ENCODE measurements at regions of chr2 and their contacts with region 1.

Region 1: DNA sequence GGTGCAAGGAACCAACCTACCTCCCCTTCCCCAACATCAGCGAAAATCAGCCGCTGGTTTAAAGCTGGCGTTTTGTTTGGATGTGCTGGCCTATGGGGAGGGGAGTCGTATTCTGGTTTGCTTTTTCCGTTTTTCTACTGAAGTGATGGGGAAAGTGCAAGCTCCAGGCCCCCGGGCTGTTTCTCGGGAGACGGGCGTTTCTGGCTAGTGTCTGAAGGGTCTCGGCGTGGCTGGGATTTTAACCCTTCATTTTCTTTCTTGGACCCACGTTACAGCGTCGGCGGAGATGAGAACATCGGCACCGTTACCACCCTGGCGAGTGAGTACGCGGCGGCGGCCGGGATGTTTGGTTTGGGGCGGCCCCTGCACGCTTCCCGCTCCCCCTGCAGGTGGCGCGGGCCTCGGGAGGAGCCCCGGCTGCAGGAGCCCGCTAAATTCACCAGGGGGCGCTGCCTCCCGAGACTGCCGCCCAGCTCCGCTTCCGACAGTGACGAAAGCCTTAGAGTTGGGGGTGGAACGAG is 70.7 kb downstream of the PLB1 start:
- DNase-seq: peak; percentile 84 to 92 (median 87)
- H3K4me3 ChIP-seq: peak overlapping the region; percentile 17 to 49
- H3K4me3 Mint-ChIP-seq: peak overlapping the region; percentile 90 to 97 (median 94)
- H3K27ac ChIP-seq: peak overlapping the region; percentile 49
- H3K27ac Mint-ChIP-seq: peak overlapping the region; percentile 90 to 97 (median 95)
- H3K4me1 ChIP-seq: peaks cover 11% of the 10 kb centered on the region
- H3K4me1 Mint-ChIP-seq: peaks cover 10 to 30% (median 18%) of the 10 kb centered on the region in 4 donors
- H3K27me3 ChIP-seq: no peaks in the 10 kb centered on the region
- H3K27me3 Mint-ChIP-seq: peaks cover 0 to 2% of the 10 kb centered on the region in 2 donors

Region 2: GRCh38 chr2:28239207-28239606 is 327.4 kb before region 1 on chr2:
- CTCF ChIA-PET with region 1: no interaction called
- POLR2A ChIA-PET with region 1: no interaction called
- intact Hi-C with region 1: no loop called
- DNase-seq: no peak
- H3K4me3 ChIP-seq: no peak overlapping the region
- H3K4me3 Mint-ChIP-seq: no peak overlapping the region
- H3K27ac ChIP-seq: no peak overlapping the region
- H3K27ac Mint-ChIP-seq: no peak overlapping the region
- H3K4me1 ChIP-seq: peaks cover 3% of the 10 kb centered on the region
- H3K4me1 Mint-ChIP-seq: peaks cover 2 to 8% (median 5%) of the 10 kb centered on the region in 4 donors
- H3K27me3 ChIP-seq: no peaks in the 10 kb centered on the region
- H3K27me3 Mint-ChIP-seq: no peaks in the 10 kb centered on the region

Region 3: DNA sequence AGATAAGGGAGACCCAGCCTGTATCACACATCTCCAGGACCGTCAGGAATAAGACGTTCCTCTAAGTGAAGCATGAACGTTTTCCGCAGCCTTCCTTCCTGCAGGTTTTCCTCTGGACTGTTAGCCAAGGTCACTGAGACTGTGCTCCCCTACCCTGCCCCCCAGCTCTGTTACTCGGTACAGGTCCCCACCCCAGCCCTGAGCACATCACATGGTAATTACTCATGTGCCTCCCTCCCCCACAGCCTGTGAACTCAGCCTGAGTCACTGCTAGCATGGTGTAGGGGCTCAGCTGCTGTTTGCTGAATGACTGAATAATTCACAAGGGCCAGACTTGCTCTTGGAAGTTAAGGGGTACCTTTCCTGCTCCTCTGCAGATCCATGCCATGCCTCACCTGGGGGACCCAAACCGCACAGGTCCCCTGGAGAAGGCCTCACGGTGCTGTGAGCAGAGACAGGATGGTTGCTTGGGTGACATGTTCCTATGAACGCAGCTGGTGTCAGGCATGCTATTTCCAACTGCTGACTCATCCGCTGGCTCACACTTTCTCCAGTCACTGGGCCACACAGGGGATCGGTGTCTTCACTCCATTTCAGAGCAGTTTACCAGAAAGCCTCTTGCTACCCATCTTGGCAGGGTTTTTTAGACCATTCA is 17.4 kb after region 1 on chr2:
- CTCF ChIA-PET with region 1: interaction called, 23 read pairs
- POLR2A ChIA-PET with region 1: interaction called, 24 read pairs
- intact Hi-C with region 1: loop called (anchors 2 kb)
- DNase-seq: peak in 1 of 5 donors; percentile 45
- H3K4me3 ChIP-seq: no peak overlapping the region
- H3K4me3 Mint-ChIP-seq: no peak overlapping the region
- H3K27ac ChIP-seq: no peak overlapping the region
- H3K27ac Mint-ChIP-seq: peak overlapping the region in 1 of 7 donors; percentile 81
- H3K4me1 ChIP-seq: peaks cover 28% of the 10 kb centered on the region
- H3K4me1 Mint-ChIP-seq: peaks cover 16 to 37% (median 25%) of the 10 kb centered on the region in 4 donors
- H3K27me3 ChIP-seq: no peaks in the 10 kb centered on the region
- H3K27me3 Mint-ChIP-seq: no peaks in the 10 kb centered on the region

Region 4: DNA sequence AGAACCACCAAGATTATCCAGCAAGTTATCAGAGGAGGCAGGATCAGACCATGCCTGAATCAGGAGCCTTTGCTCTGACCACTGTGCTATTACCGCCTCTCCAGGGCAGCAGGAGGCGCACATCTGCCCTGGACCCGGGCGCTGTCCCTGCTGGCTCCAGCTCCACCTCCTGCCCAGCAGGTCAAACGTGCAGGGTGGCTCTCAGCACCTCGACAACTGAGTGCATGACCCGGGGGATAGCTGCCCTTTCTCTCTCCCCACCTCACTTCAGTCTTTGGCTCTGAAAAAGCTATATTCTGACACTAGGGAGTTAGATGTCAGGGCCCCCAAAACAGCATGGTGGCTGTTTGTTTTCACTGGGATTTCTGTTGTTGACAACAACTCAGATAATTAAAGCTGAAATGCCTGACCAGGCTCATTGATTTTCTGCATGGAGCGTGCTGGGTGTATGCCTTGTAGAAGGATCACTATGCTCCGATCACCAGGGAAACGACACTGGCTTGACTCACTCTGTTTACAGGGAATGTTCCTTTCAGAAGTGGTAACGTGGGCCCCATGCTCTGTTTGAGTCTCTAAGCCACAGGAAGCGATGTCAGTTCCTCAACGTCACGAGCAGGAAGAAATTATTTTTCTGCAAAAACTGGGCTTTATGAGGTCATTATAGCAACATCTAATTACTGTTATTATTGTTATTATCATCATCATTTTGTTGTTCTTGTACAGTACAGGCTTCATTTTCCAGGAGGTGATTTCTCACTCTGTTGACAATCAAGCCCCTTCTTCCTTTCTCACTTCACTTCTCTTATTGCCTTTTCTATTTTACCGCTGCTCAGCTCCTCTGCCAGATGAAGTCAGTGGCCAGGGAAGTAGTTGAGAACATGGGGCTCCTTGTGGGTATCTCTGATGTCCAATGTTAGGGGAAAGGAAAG is 54.9 kb after region 1 on chr2:
- CTCF ChIA-PET with region 1: interaction called, 3 read pairs
- POLR2A ChIA-PET with region 1: no interaction called
- intact Hi-C with region 1: loop called (anchors 2 kb)
- DNase-seq: peak; percentile 92 to 97 (median 95)
- H3K4me3 ChIP-seq: peak overlapping the region in 1 of 2 donors; percentile 39
- H3K4me3 Mint-ChIP-seq: peak overlapping the region; percentile 65 to 84 (median 76)
- H3K27ac ChIP-seq: peak overlapping the region; percentile 97
- H3K27ac Mint-ChIP-seq: peak overlapping the region; percentile 98 to 100 (median 100)
- H3K4me1 ChIP-seq: peaks cover 98% of the 10 kb centered on the region
- H3K4me1 Mint-ChIP-seq: peaks cover 78 to 98% (median 80%) of the 10 kb centered on the region in 4 donors
- H3K27me3 ChIP-seq: no peaks in the 10 kb centered on the region
- H3K27me3 Mint-ChIP-seq: no peaks in the 10 kb centered on the region

Region 5: GRCh38 chr2:28764909-28765711 is 198.5 kb after region 1 on chr2:
- CTCF ChIA-PET with region 1: interaction called, 23 read pairs
- POLR2A ChIA-PET with region 1: interaction called, 3 read pairs
- intact Hi-C with region 1: no loop called
- DNase-seq: no peak
- H3K4me3 ChIP-seq: no peak overlapping the region
- H3K4me3 Mint-ChIP-seq: peak overlapping the region in 7 of 8 donors; percentile 17 to 73 (median 27)
- H3K27ac ChIP-seq: no peak overlapping the region
- H3K27ac Mint-ChIP-seq: peak overlapping the region in 5 of 7 donors; percentile 22 to 77 (median 54)
- H3K4me1 ChIP-seq: peaks cover 97% of the 10 kb centered on the region
- H3K4me1 Mint-ChIP-seq: peaks cover 54 to 99% (median 74%) of the 10 kb centered on the region in 4 donors
- H3K27me3 ChIP-seq: no peaks in the 10 kb centered on the region
- H3K27me3 Mint-ChIP-seq: no peaks in the 10 kb centered on the region

Region 6: DNA sequence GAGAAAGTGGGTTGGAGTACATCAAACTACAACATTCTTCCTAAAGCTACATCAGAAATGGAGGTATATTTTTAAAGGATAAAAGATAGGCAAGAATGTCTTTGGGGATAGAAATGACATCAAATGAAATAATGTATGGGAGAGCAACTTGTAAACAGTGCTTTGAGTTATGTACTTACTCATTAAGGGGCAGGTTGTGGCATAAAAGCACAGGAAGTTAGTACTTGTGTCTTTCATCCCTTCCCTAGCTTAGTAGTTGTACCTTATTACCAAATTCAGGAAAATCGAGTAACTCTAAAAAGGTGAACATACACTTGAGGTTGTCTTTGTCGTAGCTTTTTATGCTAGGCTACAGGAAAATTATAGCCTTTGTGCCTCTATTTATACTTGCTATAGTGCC is 213.9 kb after region 1 on chr2:
- CTCF ChIA-PET with region 1: interaction called, 10 read pairs
- POLR2A ChIA-PET with region 1: interaction called, 5 read pairs
- intact Hi-C with region 1: no loop called
- DNase-seq: no peak
- H3K4me3 ChIP-seq: no peak overlapping the region
- H3K4me3 Mint-ChIP-seq: no peak overlapping the region
- H3K27ac ChIP-seq: no peak overlapping the region
- H3K27ac Mint-ChIP-seq: peak overlapping the region in 2 of 7 donors; percentile 11 to 46
- H3K4me1 ChIP-seq: peaks cover 7% of the 10 kb centered on the region
- H3K4me1 Mint-ChIP-seq: peaks cover 10 to 19% (median 15%) of the 10 kb centered on the region in 4 donors
- H3K27me3 ChIP-seq: no peaks in the 10 kb centered on the region
- H3K27me3 Mint-ChIP-seq: no peaks in the 10 kb centered on the region

Region 7: GRCh38 chr2:28810384-28811285 is 244.1 kb after region 1 on chr2 and contains the start of gene SPDYA:
- CTCF ChIA-PET with region 1: interaction called, 4 read pairs
- POLR2A ChIA-PET with region 1: no interaction called
- intact Hi-C with region 1: loop called (anchors 2 kb)
- DNase-seq: peak; percentile 76 to 81 (median 79)
- H3K4me3 ChIP-seq: peak within 1 kb of the TSS in 1 of 2 donors; percentile 60
- H3K4me3 Mint-ChIP-seq: peak within 1 kb of the TSS; percentile 79 to 91 (median 84)
- H3K27ac ChIP-seq: peak within 1 kb of the TSS; percentile 41
- H3K27ac Mint-ChIP-seq: peak within 1 kb of the TSS; percentile 73 to 88 (median 84)
- H3K4me1 ChIP-seq: peaks cover 13% of the 10 kb centered on the region
- H3K4me1 Mint-ChIP-seq: peaks cover 5 to 16% (median 11%) of the 10 kb centered on the region in 4 donors
- H3K27me3 ChIP-seq: no peaks in the 10 kb centered on the region
- H3K27me3 Mint-ChIP-seq: no peaks in the 10 kb centered on the region
- total RNA-seq, gene SPDYA: 4.5 to 4.9 TPM

Region 8: GRCh38 chr2:28958689-28959088 is 392.1 kb after region 1 on chr2:
- CTCF ChIA-PET with region 1: no interaction called
- POLR2A ChIA-PET with region 1: no interaction called
- intact Hi-C with region 1: loop called (anchors 10 kb)
- DNase-seq: peak in 4 of 5 donors; percentile 51 to 67 (median 64)
- H3K4me3 ChIP-seq: no peak overlapping the region
- H3K4me3 Mint-ChIP-seq: no peak overlapping the region
- H3K27ac ChIP-seq: no peak overlapping the region
- H3K27ac Mint-ChIP-seq: peak overlapping the region in 1 of 7 donors; percentile 7
- H3K4me1 ChIP-seq: peaks cover 10% of the 10 kb centered on the region
- H3K4me1 Mint-ChIP-seq: peaks cover 0 to 10% (median 5%) of the 10 kb centered on the region in 4 donors
- H3K27me3 ChIP-seq: no peaks in the 10 kb centered on the region
- H3K27me3 Mint-ChIP-seq: no peaks in the 10 kb centered on the region

Measured in CD4-positive, alpha-beta memory T cell (primary cell).